ENCODE measurements at regions of chr3 and their contacts with region 1.

Region 1: GRCh38 chr3:184727357-184728009 is 15.6 kb upstream of the MAGEF1 start:
- DNase-seq: peak; percentile 88
- H3K4me3 ChIP-seq: peak overlapping the region in 1 of 2 experiments; percentile 43; a peak in 1 of 4 replicates
- H3K27ac ChIP-seq: peak overlapping the region in 1 of 2 experiments; percentile 50; a peak in 2 of 4 replicates
- H3K4me1 ChIP-seq: peaks cover 0 to 22% of the 10 kb centered on the region in 2 experiments; a peak in 2 of 4 replicates
- H3K27me3 ChIP-seq: no peaks in the 10 kb centered on the region
- CTCF ChIP-seq: peak; percentile 86
- EP300 ChIP-seq: no peak
- RAD21 ChIP-seq: peak; percentile 87

Region 2: DNA sequence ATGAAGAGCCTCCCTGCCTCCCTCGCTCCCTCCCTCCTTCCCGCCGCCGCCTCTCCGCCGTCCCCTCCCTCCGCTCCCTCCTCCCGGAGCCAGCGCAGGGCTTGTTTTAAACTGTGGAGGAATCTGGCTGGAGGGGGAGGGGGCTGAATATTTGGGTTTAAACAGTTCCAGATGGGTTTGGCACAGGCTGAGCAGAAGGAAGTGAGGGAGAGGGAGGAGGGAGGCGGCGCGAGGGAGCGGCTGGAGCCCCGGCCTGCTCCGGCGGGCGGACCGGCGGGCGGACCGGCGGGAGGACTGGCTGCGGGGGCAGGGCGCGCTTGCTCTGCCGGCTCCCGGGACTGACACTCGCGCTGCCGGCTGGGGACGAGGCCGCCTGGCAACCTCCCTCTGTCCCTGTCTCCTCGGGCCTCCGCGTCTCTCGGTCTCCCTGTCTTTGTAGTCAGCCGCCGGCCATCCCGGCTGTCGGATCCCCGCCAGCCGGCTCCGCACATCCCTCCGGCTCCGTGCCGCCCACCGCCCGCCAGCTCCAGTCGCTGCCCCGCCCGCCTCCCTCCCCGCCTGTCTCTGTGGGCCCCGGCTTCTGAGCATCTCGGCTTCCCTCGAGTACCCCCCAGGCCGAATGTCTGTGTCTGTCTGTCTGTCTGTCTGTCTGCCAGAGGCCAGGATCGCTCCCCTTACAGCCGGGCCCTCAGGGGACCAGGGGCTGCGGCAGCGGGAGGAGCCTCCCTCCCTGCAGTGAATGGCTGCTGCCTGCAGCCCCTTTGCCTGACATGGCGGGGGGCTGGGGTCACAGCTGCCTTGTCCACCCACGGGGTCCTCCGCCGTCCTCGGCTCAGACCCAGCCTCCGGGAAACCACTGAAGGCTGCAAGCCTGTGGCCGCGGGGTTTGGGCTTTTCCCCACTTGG is 158.3 kb before region 1 on chr3:
- CTCF ChIA-PET with region 1: interaction called, 26 read pairs
- POLR2A ChIA-PET with region 1: no interaction called
- DNase-seq: peak; percentile 90
- H3K4me3 ChIP-seq: peak overlapping the region; percentile 50 to 64
- H3K27ac ChIP-seq: peak overlapping the region; percentile 72 to 78
- H3K4me1 ChIP-seq: peaks cover 32 to 65% of the 10 kb centered on the region in 2 experiments
- H3K27me3 ChIP-seq: no peaks in the 10 kb centered on the region
- CTCF ChIP-seq: no peak
- EP300 ChIP-seq: peak; percentile 83 to 93
- RAD21 ChIP-seq: peak; percentile 12

Region 3: GRCh38 chr3:184574515-184575417 is 152.7 kb before region 1 on chr3:
- CTCF ChIA-PET with region 1: interaction called, 11 read pairs
- POLR2A ChIA-PET with region 1: no interaction called
- DNase-seq: peak; percentile 88
- H3K4me3 ChIP-seq: no peak overlapping the region
- H3K27ac ChIP-seq: peak overlapping the region in 1 of 2 experiments; percentile 84; a peak in 2 of 4 replicates
- H3K4me1 ChIP-seq: peaks cover 0 to 34% of the 10 kb centered on the region in 2 experiments; a peak in 2 of 4 replicates
- H3K27me3 ChIP-seq: no peaks in the 10 kb centered on the region
- CTCF ChIP-seq: no peak
- EP300 ChIP-seq: no peak
- RAD21 ChIP-seq: 0 out of 2 replicates have a peak, but pooled peaks have one; percentile 13

Region 4: DNA sequence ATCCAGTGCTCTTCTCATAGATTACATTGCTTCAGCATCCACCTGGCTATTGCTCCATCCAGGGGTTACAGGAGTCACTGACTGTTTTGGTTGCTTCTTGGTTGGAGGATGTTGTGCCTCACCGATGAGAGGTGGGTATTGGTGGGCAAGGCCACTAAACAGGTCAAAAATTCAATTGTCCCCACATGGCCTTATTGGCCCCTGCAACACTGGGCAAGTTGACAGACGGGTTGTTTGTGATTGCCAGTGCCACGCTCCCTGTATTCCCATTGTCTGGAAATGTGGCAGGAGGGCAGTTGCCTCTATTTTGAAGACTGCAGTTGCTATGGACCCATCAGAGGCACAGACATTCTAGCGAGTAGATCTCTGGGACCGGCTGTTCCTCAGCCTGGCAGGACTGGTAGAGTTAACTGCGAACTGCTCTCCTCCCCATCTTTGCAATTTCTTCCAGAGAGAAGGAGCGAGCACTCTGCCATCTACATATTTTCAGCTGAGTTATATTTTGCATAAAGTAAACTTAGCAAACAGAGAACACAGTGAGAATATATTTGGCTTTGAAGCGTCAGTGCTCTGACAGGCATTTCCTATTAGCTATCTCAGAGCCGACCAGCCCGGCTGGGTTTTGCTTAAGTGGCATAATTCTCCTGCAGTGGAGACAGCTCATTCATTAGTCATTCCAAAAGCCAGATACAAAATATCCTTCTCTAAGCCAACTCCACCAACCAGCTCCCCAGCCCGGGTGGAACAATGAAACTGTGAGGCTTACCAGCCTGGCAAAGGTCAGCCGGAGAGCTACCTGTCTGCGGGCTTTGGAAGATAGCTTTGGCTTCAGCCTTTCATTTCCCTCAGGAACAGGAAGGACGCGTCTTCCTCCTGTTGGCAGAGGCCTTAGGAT is 10.4 kb after region 1 on chr3:
- CTCF ChIA-PET with region 1: interaction called, 27 read pairs
- POLR2A ChIA-PET with region 1: no interaction called
- DNase-seq: no peak
- H3K4me3 ChIP-seq: no peak overlapping the region
- H3K27ac ChIP-seq: no peak overlapping the region
- H3K4me1 ChIP-seq: peaks cover 14 to 15% of the 10 kb centered on the region in 2 experiments; a peak in 2 of 4 replicates
- H3K27me3 ChIP-seq: no peaks in the 10 kb centered on the region
- CTCF ChIP-seq: no peak
- EP300 ChIP-seq: no peak
- RAD21 ChIP-seq: no peak

Region 5: GRCh38 chr3:184911570-184911969 is 184.1 kb after region 1 on chr3:
- CTCF ChIA-PET with region 1: no interaction called
- POLR2A ChIA-PET with region 1: no interaction called
- DNase-seq: no peak
- H3K4me3 ChIP-seq: no peak overlapping the region
- H3K27ac ChIP-seq: no peak overlapping the region
- H3K4me1 ChIP-seq: no peaks in the 10 kb centered on the region
- H3K27me3 ChIP-seq: no peaks in the 10 kb centered on the region
- CTCF ChIP-seq: no peak
- EP300 ChIP-seq: no peak
- RAD21 ChIP-seq: no peak

Region 6: GRCh38 chr3:185070491-185071286 is 343.2 kb after region 1 on chr3:
- CTCF ChIA-PET with region 1: no interaction called
- POLR2A ChIA-PET with region 1: no interaction called
- DNase-seq: peak; percentile 72
- H3K4me3 ChIP-seq: no peak overlapping the region
- H3K27ac ChIP-seq: no peak overlapping the region; a peak in 1 of 4 replicates
- H3K4me1 ChIP-seq: peaks cover 0 to 11% of the 10 kb centered on the region in 2 experiments; a peak in 1 of 4 replicates
- H3K27me3 ChIP-seq: no peaks in the 10 kb centered on the region; the same call in 1 of the 2 replicates
- CTCF ChIP-seq: peak; percentile 21; the same call in 1 of the 2 replicates
- EP300 ChIP-seq: no peak
- RAD21 ChIP-seq: peak; percentile 53

Measured in SK-N-SH (cell line).